HEK293 (cell line): ENCODE measurements at regions of chr22 and their contacts with region 1.

Region 1: GRCh38 chr22:17158568-17159503 is at the start of gene HDHD5:
- H3K4me3 ChIP-seq: peak within 1 kb of the TSS; percentile 73
- H3K27ac ChIP-seq: peak within 1 kb of the TSS; percentile 76
- H3K4me1 ChIP-seq: peaks cover 7% of the 10 kb centered on the region
- CTCF ChIP-seq: peak; percentile 47; the same call in 1 of the 2 replicates

Region 2: GRCh38 chr22:16970446-16970845 is 188.4 kb before region 1 on chr22:
- CTCF ChIA-PET with region 1: interaction called, 10 read pairs
- POLR2A ChIA-PET with region 1: no interaction called
- H3K4me3 ChIP-seq: no peak overlapping the region
- H3K27ac ChIP-seq: no peak overlapping the region
- H3K4me1 ChIP-seq: no peaks in the 10 kb centered on the region
- CTCF ChIP-seq: no peak

Region 3: DNA sequence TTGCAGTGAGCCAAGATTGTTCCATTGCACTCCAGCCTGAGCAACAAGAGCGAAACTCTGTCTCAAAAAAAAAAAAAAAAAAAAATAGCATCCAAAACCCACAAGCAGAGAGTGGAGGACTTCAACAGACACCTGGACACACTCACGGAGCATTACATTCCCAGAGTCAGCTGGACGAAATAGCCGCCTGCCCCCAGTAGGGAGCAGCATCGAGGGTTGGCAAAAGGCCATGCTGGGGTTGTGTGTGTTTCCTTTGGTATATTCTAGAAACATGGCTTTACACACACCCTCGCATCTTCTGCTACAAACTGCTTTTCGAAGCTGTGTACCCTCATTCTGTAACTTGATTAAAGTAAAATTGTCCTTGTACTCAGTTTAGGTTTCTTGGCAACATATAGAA is 55.1 kb after region 1 on chr22:
- CTCF ChIA-PET with region 1: no interaction called
- POLR2A ChIA-PET with region 1: no interaction called
- H3K4me3 ChIP-seq: no peak overlapping the region
- H3K27ac ChIP-seq: no peak overlapping the region
- H3K4me1 ChIP-seq: no peaks in the 10 kb centered on the region
- CTCF ChIP-seq: no peak